ENCODE measurements at regions of chr14 and their contacts with region 1.

Region 1: DNA sequence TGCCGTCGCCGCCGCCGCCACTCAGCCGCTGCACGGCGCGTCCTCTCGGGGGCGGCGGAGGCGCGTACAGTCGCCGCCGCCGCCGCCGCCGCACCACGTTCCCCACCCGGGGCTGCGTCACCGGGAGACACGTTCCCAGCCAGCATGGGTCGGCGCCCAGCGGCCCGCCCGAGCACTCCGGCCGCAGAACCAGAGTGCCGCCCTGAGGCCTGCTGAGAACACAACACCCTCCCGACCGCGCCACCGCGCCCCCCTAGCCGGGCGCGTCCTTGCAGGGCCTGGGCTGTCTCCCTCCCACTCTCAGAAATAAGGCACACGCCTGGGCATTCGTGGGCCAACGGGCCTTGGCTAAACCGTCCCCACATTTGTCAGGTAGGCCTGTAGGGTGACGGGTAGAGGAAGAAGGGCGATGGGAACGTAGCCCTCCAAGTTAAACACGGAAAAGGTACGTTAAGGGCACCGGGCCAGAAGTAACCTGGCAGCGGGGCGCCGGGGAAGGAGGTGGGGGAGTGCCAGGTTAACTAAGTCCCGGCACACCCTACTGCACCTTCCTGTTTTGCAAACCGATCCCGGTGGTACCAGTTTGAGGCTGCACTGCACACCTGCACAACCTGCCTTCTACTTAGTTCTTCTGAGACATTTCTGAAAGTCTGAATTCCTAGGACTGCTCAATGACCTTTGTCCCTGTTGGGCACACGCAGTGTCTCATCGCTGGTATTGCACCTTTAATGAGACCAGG is at the start of gene MAP4K5:
- DNase-seq: peak; percentile 89
- H3K4me3 Mint-ChIP-seq: peak within 1 kb of the TSS; percentile 80
- H3K27ac Mint-ChIP-seq: peak within 1 kb of the TSS; percentile 46
- H3K4me1 Mint-ChIP-seq: peaks cover 34% of the 10 kb centered on the region
- H3K27me3 Mint-ChIP-seq: no peaks in the 10 kb centered on the region
- CTCF ChIP-seq: peak; percentile 91
- total RNA-seq, gene MAP4K5: 43.8 and 45.7 TPM in 2 replicates

Region 2: DNA sequence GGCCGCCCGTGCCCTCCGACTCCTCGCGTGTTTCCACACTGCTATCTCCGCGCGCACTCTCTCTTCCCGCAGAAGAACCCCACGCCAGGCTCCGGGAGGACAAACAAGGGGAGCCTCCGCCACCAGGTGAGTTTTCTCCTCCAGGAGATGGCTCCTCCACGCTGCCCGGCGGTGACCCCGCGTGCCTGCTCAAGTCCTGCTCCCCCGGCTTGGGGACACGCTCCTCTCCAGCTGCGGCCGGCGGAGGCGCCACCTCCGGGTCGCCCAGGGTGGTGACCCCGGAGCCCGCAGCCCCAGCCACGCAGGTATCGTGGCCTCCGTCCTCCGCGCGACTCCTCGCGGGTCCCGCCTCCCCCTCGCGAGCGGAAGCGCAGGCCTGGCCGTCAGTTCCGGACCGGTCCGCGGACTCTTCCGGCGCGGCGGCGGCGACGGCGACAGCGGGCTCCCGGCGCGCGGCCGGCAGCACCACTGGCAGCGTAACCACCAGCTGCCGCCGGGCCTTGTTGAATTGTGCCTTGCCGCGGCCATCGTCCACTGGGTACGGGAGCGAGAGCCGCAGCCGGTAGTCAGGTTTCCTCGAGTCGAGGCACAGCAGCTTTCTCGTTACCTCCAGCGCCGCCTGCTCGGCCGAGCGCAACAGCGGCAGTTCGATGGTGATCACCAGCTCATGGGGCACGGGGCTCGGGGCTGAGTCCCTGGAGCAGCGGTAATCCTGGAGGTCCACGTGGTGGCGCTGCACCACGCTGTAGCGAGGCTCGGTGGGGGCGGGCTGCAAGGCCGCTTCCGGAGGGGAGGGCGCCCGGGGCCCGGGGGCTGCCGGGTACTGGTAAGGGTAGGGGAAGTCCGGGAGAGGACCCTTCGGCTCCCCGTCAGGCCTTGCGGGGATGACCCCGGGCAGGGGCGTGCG is 898.8 kb before region 1 on chr14:
- CTCF ChIA-PET with region 1: no interaction called
- POLR2A ChIA-PET with region 1: no interaction called
- intact Hi-C with region 1: loop called (anchors 5 kb)
- DNase-seq: peak; percentile 92
- H3K4me3 Mint-ChIP-seq: peak overlapping the region; percentile 95
- H3K27ac Mint-ChIP-seq: peak overlapping the region; percentile 99
- H3K4me1 Mint-ChIP-seq: peaks cover 14% of the 10 kb centered on the region
- H3K27me3 Mint-ChIP-seq: no peaks in the 10 kb centered on the region
- CTCF ChIP-seq: peak; percentile 83

Region 3: DNA sequence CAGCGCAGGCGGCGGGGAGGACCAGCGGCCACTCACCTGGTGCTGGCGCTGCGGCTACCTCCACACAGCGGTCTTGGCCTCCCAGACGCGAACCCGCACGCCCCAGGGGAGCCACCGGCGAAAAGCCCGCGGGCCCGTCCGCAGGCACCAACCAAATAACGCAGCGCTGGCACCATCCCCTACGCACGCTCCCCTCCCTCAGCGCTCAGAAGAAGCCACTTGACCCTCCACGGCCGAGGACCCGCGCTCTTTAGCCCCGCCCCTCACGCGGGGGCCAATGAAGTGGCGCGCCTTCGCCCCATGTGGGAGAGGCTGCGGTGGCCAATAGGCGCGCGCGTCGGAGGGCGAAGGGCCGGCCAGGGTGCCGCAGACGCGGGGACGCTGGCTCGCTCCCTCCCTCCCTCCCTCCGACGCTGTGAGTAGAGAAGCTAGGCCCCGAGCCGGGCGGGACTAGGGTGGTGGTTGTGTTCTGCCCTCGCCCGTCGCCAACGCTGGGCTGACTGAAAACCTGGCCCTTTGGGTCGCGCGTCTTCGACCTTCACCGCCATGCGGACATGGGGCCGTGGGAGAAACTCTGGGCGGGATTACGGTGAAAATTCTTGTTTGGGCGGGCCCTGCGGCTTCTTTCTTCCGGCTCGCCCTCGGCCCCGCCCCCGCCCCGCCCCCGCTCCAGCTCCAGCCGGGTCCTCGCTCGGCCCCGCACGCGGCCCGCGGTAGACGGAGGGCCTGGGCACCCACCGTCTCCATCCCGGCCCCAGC is 220.5 kb before region 1 on chr14 and contains the starts of genes DMAC2L and L2HGDH:
- CTCF ChIA-PET with region 1: interaction called, 3 read pairs
- POLR2A ChIA-PET with region 1: interaction called, 13 read pairs
- intact Hi-C with region 1: no loop called
- DNase-seq: peak; percentile 97
- H3K4me3 Mint-ChIP-seq: peak within 1 kb of the TSS; percentile 94
- H3K27ac Mint-ChIP-seq: peak within 1 kb of the TSS; percentile 91
- H3K4me1 Mint-ChIP-seq: peaks cover 18% of the 10 kb centered on the region
- H3K27me3 Mint-ChIP-seq: no peaks in the 10 kb centered on the region
- CTCF ChIP-seq: no peak
- total RNA-seq, gene DMAC2L: 16.3 and 17.6 TPM in 2 replicates
- total RNA-seq, gene L2HGDH: 7.9 TPM in 2 replicates

Region 4: GRCh38 chr14:50342221-50343078 is 190.2 kb before region 1 on chr14:
- CTCF ChIA-PET with region 1: no interaction called
- POLR2A ChIA-PET with region 1: no interaction called
- intact Hi-C with region 1: loop called (anchors 1 kb)
- DNase-seq: peak; percentile 30
- H3K4me3 Mint-ChIP-seq: no peak overlapping the region
- H3K27ac Mint-ChIP-seq: peak overlapping the region; percentile 66
- H3K4me1 Mint-ChIP-seq: peaks cover 18% of the 10 kb centered on the region
- H3K27me3 Mint-ChIP-seq: no peaks in the 10 kb centered on the region
- CTCF ChIP-seq: peak; percentile 16

Region 5: DNA sequence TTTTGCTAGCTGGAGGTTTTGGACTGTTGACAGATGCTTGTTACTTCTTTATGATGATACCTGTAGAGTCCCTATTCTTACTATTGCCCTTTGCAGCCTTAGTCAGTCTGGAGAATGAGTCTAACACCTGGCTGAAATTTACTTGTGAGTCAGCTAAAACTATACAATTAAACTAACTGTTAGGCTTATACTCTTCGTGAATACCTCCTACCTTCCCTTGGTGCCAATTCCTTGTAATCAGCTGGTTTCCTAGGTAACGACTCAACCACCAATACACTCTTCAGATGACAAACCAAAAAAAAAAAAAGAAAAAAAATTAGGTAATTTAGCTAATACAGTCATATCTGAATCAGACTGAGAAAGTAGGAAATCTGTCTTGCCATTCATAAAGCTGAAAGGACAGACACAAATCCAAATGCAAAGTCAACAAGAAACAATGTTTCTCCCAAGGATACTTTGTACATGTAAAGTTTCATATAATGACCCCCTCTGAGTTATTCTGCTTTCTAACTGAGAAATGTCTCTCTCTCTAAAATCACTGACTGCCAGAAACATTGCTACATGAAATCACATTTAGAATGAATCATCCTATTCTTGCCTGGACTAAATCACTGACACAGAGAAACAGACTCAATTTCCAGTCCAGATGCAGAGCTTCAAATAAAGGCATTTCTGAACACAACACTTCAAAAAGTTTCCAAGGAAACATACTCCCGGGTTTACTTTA is 79.5 kb before region 1 on chr14:
- CTCF ChIA-PET with region 1: interaction called, 3 read pairs
- POLR2A ChIA-PET with region 1: interaction called, 6 read pairs
- intact Hi-C with region 1: loop called (anchors 2 kb)
- DNase-seq: peak; percentile 61
- H3K4me3 Mint-ChIP-seq: no peak overlapping the region
- H3K27ac Mint-ChIP-seq: peak overlapping the region; percentile 71
- H3K4me1 Mint-ChIP-seq: peaks cover 16% of the 10 kb centered on the region
- H3K27me3 Mint-ChIP-seq: no peaks in the 10 kb centered on the region
- CTCF ChIP-seq: no peak

Region 6: GRCh38 chr14:50469982-50470381 is 62.7 kb before region 1 on chr14:
- CTCF ChIA-PET with region 1: no interaction called
- POLR2A ChIA-PET with region 1: no interaction called
- intact Hi-C with region 1: no loop called
- DNase-seq: no peak
- H3K4me3 Mint-ChIP-seq: no peak overlapping the region
- H3K27ac Mint-ChIP-seq: no peak overlapping the region
- H3K4me1 Mint-ChIP-seq: no peaks in the 10 kb centered on the region
- H3K27me3 Mint-ChIP-seq: no peaks in the 10 kb centered on the region
- CTCF ChIP-seq: no peak